MCF 10A (cell line): ENCODE measurements at regions of chr13 and their contacts with region 1.

Region 1: GRCh38 chr13:91946498-91947070 is 548.2 kb downstream of the GPC5 start:
- DNase-seq: peak; percentile 46
- H3K4me3 Mint-ChIP-seq: no peak overlapping the region
- H3K27ac Mint-ChIP-seq: no peak overlapping the region
- H3K4me1 Mint-ChIP-seq: no peaks in the 10 kb centered on the region
- H3K27me3 Mint-ChIP-seq: peaks cover 87% of the 10 kb centered on the region
- CTCF ChIP-seq: peak; percentile 78

Region 2: GRCh38 chr13:91934354-91934753 is 12.2 kb before region 1 on chr13:
- CTCF ChIA-PET with region 1: interaction called, 18 read pairs
- POLR2A ChIA-PET with region 1: no interaction called
- intact Hi-C with region 1: no loop called
- DNase-seq: no peak
- H3K4me3 Mint-ChIP-seq: no peak overlapping the region
- H3K27ac Mint-ChIP-seq: no peak overlapping the region
- H3K4me1 Mint-ChIP-seq: no peaks in the 10 kb centered on the region
- H3K27me3 Mint-ChIP-seq: peaks cover 90% of the 10 kb centered on the region
- CTCF ChIP-seq: no peak

Region 3: DNA sequence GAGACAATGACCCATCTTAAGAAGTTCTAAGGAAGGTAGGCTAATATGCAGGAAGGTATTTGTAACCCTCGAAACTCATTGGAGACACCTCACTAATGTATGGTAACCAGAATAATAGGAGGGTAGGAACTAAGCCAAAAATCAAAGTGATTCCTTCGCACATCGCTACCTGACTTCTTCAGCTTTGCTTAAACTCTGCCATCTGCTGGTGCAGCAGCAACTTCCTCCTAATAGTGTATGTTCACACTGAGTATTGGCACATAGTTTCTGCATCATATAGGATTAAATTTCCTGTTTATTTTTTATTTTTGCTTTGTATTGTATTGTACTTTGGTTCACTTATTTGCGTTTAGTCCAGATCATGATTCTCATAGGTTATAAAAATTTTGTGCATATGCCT is 128.1 kb after region 1 on chr13:
- CTCF ChIA-PET with region 1: interaction called, 6 read pairs
- POLR2A ChIA-PET with region 1: no interaction called
- intact Hi-C with region 1: loop called (anchors 2 kb)
- DNase-seq: peak; percentile 29
- H3K4me3 Mint-ChIP-seq: no peak overlapping the region
- H3K27ac Mint-ChIP-seq: no peak overlapping the region
- H3K4me1 Mint-ChIP-seq: no peaks in the 10 kb centered on the region
- H3K27me3 Mint-ChIP-seq: peaks cover 27% of the 10 kb centered on the region
- CTCF ChIP-seq: peak; percentile 30

Region 4: GRCh38 chr13:92143766-92144165 is 197.2 kb after region 1 on chr13:
- CTCF ChIA-PET with region 1: interaction called, 4 read pairs
- POLR2A ChIA-PET with region 1: no interaction called
- intact Hi-C with region 1: loop called (anchors 5 kb)
- DNase-seq: no peak
- H3K4me3 Mint-ChIP-seq: no peak overlapping the region
- H3K27ac Mint-ChIP-seq: no peak overlapping the region
- H3K4me1 Mint-ChIP-seq: no peaks in the 10 kb centered on the region
- H3K27me3 Mint-ChIP-seq: peaks cover 36% of the 10 kb centered on the region
- CTCF ChIP-seq: no peak